ENCODE measurements at regions of chr15 and their contacts with region 1.

Region 1: DNA sequence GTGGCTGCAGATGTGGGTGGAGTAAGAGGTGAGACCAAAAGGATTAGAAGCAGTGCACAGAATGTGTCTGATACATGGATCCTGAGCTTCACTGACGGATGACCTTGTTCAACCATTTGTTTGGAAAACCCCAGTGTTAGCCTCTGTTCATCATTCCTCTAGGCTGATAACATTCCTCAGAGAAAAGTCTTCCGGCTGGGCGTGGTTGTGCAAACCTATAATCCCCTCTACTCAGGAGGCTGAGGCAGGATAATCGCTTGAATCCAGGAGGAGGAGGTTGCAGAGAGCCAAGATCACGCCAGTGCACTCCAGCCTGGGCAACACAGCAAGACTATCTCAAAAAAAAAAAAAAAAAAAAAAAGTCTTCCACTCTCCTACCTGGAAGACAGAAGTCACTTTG is 23.1 kb upstream of the CHD2 start:
- DNase-seq: peak; percentile 67 to 81
- H3K4me3 ChIP-seq: no peak overlapping the region
- H3K4me3 Mint-ChIP-seq: peak overlapping the region; percentile 53
- H3K27ac Mint-ChIP-seq: peak overlapping the region; percentile 89
- H3K4me1 ChIP-seq: peaks cover 45% of the 10 kb centered on the region
- H3K4me1 Mint-ChIP-seq: peaks cover 45% of the 10 kb centered on the region
- H3K27me3 ChIP-seq: no peaks in the 10 kb centered on the region
- H3K27me3 Mint-ChIP-seq: no peaks in the 10 kb centered on the region
- CTCF ChIP-seq: no peak

Region 2: DNA sequence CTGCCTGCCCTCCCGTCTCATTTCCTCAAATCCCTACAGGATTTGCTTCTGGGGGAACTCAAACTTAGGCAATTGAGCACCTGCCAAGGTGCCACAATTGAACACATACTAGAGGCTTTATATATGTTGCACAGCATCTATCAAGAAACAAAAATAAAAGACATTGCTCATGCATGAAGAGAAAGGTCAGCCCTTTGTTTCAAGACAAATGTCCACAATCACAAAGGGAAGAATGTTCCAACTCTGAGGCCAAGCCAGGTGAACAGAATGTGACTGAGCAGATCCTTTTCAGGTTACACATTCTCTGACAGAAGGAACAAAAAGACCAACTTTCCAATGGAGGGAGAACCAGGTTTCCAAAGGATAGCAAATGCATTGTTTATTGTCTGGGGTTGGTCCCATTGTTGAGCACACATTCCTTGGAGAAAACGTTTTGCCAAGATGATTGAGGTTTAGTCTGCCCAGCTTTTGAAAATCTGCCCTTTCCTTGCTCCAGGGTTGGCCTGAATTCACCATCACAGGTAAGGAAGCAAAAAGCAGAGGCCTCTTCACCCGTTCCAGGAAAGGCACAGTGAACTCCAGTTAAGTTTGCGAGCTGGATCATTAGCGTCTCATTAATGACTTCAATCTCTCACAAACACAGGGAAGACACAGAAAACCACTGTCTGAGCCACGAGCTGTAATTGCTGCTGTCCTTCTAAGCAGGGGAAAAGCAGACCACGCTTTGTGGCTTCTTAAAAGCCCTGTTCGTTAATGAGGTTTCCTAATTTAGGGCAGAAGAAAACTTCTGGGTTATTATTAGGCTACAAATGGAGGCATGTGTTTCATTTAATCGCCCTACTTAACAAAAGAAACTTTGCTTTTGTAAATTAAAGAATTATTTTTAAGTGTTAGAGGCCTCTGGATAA is 171.1 kb before region 1 on chr15:
- CTCF ChIA-PET with region 1: no interaction called
- POLR2A ChIA-PET with region 1: no interaction called
- intact Hi-C with region 1: no loop called
- DNase-seq: no peak
- H3K4me3 ChIP-seq: no peak overlapping the region
- H3K4me3 Mint-ChIP-seq: no peak overlapping the region
- H3K27ac Mint-ChIP-seq: no peak overlapping the region
- H3K4me1 ChIP-seq: no peaks in the 10 kb centered on the region
- H3K4me1 Mint-ChIP-seq: no peaks in the 10 kb centered on the region
- H3K27me3 ChIP-seq: no peaks in the 10 kb centered on the region
- H3K27me3 Mint-ChIP-seq: no peaks in the 10 kb centered on the region
- CTCF ChIP-seq: no peak

Region 3: GRCh38 chr15:92831655-92832328 is 45.2 kb before region 1 on chr15:
- CTCF ChIA-PET with region 1: interaction called, 9 read pairs
- POLR2A ChIA-PET with region 1: interaction called, 35 read pairs
- intact Hi-C with region 1: loop called (anchors 1 kb)
- DNase-seq: peak; percentile 94 to 96
- H3K4me3 ChIP-seq: peak overlapping the region; percentile 13; the same call in 1 of the 2 replicates
- H3K4me3 Mint-ChIP-seq: peak overlapping the region; percentile 54
- H3K27ac Mint-ChIP-seq: peak overlapping the region; percentile 66
- H3K4me1 ChIP-seq: peaks cover 22% of the 10 kb centered on the region
- H3K4me1 Mint-ChIP-seq: peaks cover 13% of the 10 kb centered on the region
- H3K27me3 ChIP-seq: no peaks in the 10 kb centered on the region
- H3K27me3 Mint-ChIP-seq: no peaks in the 10 kb centered on the region
- CTCF ChIP-seq: no peak

Measured in Caco-2 (cell line).